PC-3 (cell line): ENCODE measurements at regions of chr9 and their contacts with region 1.

Region 1: GRCh38 chr9:108813951-108814601 is 41.7 kb downstream of the ACTL7B start:
- DNase-seq: peak; percentile 82
- ATAC-seq: peak; percentile 91
- H3K4me3 ChIP-seq: no peak overlapping the region
- H3K27ac ChIP-seq: no peak overlapping the region
- H3K4me1 ChIP-seq: peaks cover 20% of the 10 kb centered on the region
- H3K27me3 ChIP-seq: no peaks in the 10 kb centered on the region
- CTCF ChIP-seq: peak; percentile 82

Region 2: GRCh38 chr9:107421947-107422793 is 1391.9 kb before region 1 on chr9:
- CTCF ChIA-PET with region 1: no interaction called
- POLR2A ChIA-PET with region 1: no interaction called
- intact Hi-C with region 1: loop called (anchors 1 kb)
- DNase-seq: peak; percentile 75
- ATAC-seq: peak; percentile 97
- H3K4me3 ChIP-seq: no peak overlapping the region
- H3K27ac ChIP-seq: no peak overlapping the region
- H3K4me1 ChIP-seq: peaks cover 4% of the 10 kb centered on the region; the same call in 1 of the 2 replicates
- H3K27me3 ChIP-seq: no peaks in the 10 kb centered on the region
- CTCF ChIP-seq: peak; percentile 74

Region 3: DNA sequence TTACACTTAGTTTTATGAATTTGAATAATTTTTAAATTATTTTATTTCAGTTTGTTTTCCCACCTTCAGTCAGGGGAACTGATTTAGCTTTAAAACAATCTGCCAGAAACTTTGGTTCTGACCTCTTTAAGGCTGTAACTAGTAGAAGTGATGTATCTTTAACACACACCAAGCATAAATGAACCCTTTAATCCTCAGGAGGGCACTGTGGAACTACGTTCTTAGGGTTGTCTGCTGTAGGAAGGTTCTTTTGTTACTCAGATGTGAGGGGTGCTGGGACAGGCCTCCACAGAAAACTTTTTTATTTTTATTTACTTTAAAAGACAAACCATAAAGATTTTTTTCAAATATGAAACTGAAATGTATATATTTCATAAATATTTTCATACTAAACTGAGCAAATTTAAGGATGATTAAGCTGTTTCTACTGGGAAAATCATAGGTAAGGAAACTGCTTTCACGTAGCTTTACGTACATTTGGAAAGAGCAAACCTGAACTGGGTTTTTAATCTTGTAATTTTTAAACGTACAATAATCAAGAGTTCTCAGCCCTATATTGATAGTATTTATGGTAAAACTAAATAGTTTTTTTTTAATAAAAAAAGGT is 1329.9 kb before region 1 on chr9:
- CTCF ChIA-PET with region 1: no interaction called
- POLR2A ChIA-PET with region 1: no interaction called
- intact Hi-C with region 1: loop called (anchors 5 kb)
- DNase-seq: peak; percentile 74
- ATAC-seq: peak; percentile 40
- H3K4me3 ChIP-seq: no peak overlapping the region
- H3K27ac ChIP-seq: no peak overlapping the region
- H3K4me1 ChIP-seq: peaks cover 27% of the 10 kb centered on the region
- H3K27me3 ChIP-seq: no peaks in the 10 kb centered on the region
- CTCF ChIP-seq: peak; percentile 66

Region 4: GRCh38 chr9:108776920-108777645 is 37.0 kb before region 1 on chr9:
- CTCF ChIA-PET with region 1: interaction called, 7 read pairs
- POLR2A ChIA-PET with region 1: no interaction called
- intact Hi-C with region 1: loop called (anchors 1 kb)
- DNase-seq: peak; percentile 43
- ATAC-seq: 0 out of 2 replicates have a peak, but pooled peaks have one; percentile 35
- H3K4me3 ChIP-seq: no peak overlapping the region
- H3K27ac ChIP-seq: no peak overlapping the region
- H3K4me1 ChIP-seq: peaks cover 9% of the 10 kb centered on the region; the same call in 1 of the 2 replicates
- H3K27me3 ChIP-seq: no peaks in the 10 kb centered on the region
- CTCF ChIP-seq: peak; percentile 58

Region 5: DNA sequence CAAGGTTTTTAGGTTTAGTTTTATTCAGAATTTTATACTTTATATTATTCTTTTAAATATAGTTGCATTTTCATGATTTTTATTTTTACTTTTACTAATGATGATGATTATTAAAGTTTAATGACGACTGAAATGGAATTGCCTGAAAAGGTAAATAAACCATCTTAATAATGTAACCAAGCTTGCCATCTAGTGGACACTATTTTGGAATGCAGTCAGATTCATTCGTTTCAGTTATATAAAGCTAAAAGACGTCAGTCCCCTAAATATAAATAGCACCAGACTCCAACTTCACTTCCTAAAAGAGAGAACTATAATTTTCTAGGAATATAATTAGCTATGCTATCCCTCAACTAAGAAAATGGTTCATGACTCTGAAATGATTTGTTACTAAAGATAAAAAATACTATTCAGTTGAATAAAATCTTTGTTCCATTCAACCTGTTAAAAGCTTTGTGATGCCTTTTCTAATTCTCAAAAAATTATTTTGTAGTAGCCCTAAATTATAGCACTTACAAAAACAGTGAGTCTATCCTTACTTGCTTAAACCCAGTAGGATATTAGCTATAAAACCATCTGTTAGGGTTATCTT is 140.0 kb after region 1 on chr9:
- CTCF ChIA-PET with region 1: no interaction called
- POLR2A ChIA-PET with region 1: no interaction called
- intact Hi-C with region 1: no loop called
- DNase-seq: peak; percentile 67
- ATAC-seq: no peak
- H3K4me3 ChIP-seq: no peak overlapping the region
- H3K27ac ChIP-seq: no peak overlapping the region
- H3K4me1 ChIP-seq: peaks cover 16% of the 10 kb centered on the region
- H3K27me3 ChIP-seq: no peaks in the 10 kb centered on the region
- CTCF ChIP-seq: peak; percentile 60